PC-9 (cell line): ENCODE measurements at regions of chr18 and their contacts with region 1.

Region 1: GRCh38 chr18:3424280-3424890 is 25.6 kb upstream of the TGIF1 start:
- DNase-seq: peak in 1 of 2 experiments; percentile 39
- H3K4me3 ChIP-seq: no peak overlapping the region
- H3K27ac ChIP-seq: peak overlapping the region; percentile 33; the same call in 1 of the 2 replicates
- H3K4me1 ChIP-seq: peaks cover 19% of the 10 kb centered on the region
- H3K27me3 ChIP-seq: no peaks in the 10 kb centered on the region
- CTCF ChIP-seq: no peak

Region 2: DNA sequence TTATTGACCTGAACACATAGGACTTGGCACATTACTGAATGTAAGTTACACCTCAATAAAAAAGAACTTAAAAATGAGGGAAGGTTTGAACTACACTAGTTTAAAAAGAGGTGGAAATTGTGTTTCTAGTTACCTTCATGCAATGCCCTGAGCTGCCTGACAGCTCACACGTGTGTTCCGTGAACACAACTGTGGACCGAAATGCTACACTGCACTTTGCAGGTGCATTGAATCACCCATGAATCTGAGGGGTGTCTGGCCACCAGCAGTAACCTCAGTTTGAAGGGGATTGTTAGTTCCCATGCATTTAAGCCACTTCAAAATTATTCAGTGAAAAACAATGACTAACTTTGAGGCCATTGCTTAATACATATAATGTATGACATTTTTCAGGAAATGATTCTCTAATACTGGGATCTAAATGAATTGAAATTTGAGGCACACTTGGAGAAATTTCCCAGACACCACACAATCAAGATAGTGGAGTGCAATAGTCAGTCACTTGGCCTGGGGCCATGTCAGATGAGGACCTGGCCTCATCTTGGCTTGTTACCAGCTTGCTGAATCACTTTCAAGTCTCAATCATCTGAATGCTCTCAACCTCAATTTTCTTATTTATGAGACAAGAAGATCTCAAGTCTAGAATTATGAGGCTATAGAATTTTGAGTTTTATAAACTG is 103.1 kb before region 1 on chr18:
- CTCF ChIA-PET with region 1: no interaction called
- POLR2A ChIA-PET with region 1: interaction called, 28 read pairs
- intact Hi-C with region 1: no loop called
- DNase-seq: peak; percentile 88 to 93
- H3K4me3 ChIP-seq: no peak overlapping the region
- H3K27ac ChIP-seq: peak overlapping the region; percentile 74
- H3K4me1 ChIP-seq: peaks cover 32% of the 10 kb centered on the region
- H3K27me3 ChIP-seq: no peaks in the 10 kb centered on the region
- CTCF ChIP-seq: no peak

Region 3: GRCh38 chr18:3368193-3368592 is 56.2 kb before region 1 on chr18:
- CTCF ChIA-PET with region 1: interaction called, 20 read pairs
- POLR2A ChIA-PET with region 1: no interaction called
- intact Hi-C with region 1: no loop called
- DNase-seq: peak; percentile 31 to 47
- H3K4me3 ChIP-seq: no peak overlapping the region
- H3K27ac ChIP-seq: peak overlapping the region; percentile 79
- H3K4me1 ChIP-seq: 0 out of 2 replicates have a peak, but pooled peaks cover 16% of the 10 kb centered on the region
- H3K27me3 ChIP-seq: no peaks in the 10 kb centered on the region
- CTCF ChIP-seq: no peak